HAP-1 (cell line): ENCODE measurements at regions of chr7 and their contacts with region 1.

Region 1: DNA sequence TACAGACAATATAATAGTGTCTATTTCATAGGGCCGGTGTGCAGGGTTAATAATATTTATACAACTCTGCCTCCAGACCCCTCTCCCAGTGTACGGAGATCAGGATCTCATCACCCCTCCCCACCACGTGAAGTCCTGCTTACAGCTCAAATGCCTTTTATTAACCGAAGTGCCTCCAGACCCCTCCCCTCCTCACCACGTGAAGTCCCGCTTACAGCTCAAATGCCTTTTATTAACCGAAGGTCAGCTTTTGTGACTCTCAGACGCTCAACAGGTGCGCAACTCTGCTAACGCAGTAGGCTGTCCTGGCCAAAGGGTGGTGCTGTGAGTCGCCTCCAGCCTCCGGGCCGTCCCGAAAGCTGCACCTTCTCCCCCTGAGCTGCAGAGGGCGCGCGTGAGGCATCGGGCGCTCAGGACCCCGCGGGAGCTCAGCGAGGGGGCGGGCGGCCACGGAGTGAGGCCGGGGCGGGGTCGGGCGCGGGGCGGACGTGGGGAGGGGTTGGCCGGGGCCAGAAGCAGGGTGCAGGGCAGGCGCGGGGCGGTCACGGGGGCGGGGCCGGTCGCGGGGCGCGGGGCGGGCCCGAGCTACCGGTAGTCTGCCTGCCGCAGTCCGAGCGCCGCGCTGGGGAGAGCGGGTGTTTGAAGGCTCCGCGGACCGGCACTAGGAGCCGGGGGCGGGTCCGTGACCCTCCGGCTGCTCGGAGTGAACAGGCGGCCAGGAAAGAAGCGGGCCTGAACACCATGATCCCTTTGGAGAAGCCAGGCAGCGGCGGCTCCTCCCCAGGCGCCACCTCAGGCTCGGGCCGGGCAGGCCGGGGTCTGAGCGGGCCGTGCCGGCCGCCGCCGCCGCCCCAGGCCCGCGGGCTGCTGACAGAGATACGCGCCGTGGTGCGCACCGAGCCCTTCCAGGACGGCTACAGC is at the start of gene STK17A:
- DNase-seq: peak; percentile 82 to 91
- H3K4me3 ChIP-seq: peak within 1 kb of the TSS; percentile 69
- H3K4me1 ChIP-seq: peaks cover 5% of the 10 kb centered on the region; the same call in 1 of the 2 replicates
- H3K27me3 ChIP-seq: peaks cover 22% of the 10 kb centered on the region

Region 2: GRCh38 chr7:43716598-43716997 is 133.8 kb after region 1 on chr7:
- in situ Hi-C with region 1: loop called (anchors 5 kb)
- DNase-seq: no peak
- H3K4me3 ChIP-seq: no peak overlapping the region
- H3K4me1 ChIP-seq: peaks cover 3% of the 10 kb centered on the region; the same call in 1 of the 2 replicates
- H3K27me3 ChIP-seq: no peaks in the 10 kb centered on the region

Region 3: GRCh38 chr7:43856996-43857395 is 274.2 kb after region 1 on chr7:
- in situ Hi-C with region 1: no loop called
- DNase-seq: no peak
- H3K4me3 ChIP-seq: no peak overlapping the region
- H3K4me1 ChIP-seq: no peaks in the 10 kb centered on the region
- H3K27me3 ChIP-seq: no peaks in the 10 kb centered on the region